GM12878 (cell line): ENCODE measurements at regions of chr13 and their contacts with region 1.

Region 1: GRCh38 chr13:44484562-44485138 is 91.5 kb downstream of the TSC22D1 start:
- DNase-seq: no peak
- ATAC-seq: peak; percentile 43; the same call in 1 of the 3 replicates
- H3K4me3 ChIP-seq: 0 out of 2 replicates have a peak overlapping the region, but pooled peaks have one; percentile 21
- H3K27ac ChIP-seq: peak overlapping the region; percentile 52
- H3K4me1 ChIP-seq: peaks cover 7% of the 10 kb centered on the region
- H3K27me3 ChIP-seq: no peaks in the 10 kb centered on the region
- CTCF ChIP-seq: no peak
- EP300 ChIP-seq: no peak
- POLR2A ChIP-seq: no peak
- RAD21 ChIP-seq: no peak

Region 2: GRCh38 chr13:44652962-44653660 is 168.5 kb after region 1 on chr13:
- CTCF ChIA-PET with region 1: no interaction called
- POLR2A ChIA-PET with region 1: no interaction called
- RAD21 ChIA-PET with region 1: no interaction called
- SMC1A ChIA-PET with region 1: no interaction called
- in situ Hi-C with region 1: no loop called
- intact Hi-C with region 1: loop called (anchors 10 kb)
- DNase-seq: no peak
- ATAC-seq: no peak
- H3K4me3 ChIP-seq: no peak overlapping the region
- H3K27ac ChIP-seq: no peak overlapping the region
- H3K4me1 ChIP-seq: no peaks in the 10 kb centered on the region
- H3K27me3 ChIP-seq: no peaks in the 10 kb centered on the region
- CTCF ChIP-seq: no peak
- EP300 ChIP-seq: no peak
- POLR2A ChIP-seq: no peak
- RAD21 ChIP-seq: no peak

Region 3: GRCh38 chr13:44758630-44759383 is 274.2 kb after region 1 on chr13:
- CTCF ChIA-PET with region 1: no interaction called
- POLR2A ChIA-PET with region 1: no interaction called
- RAD21 ChIA-PET with region 1: no interaction called
- SMC1A ChIA-PET with region 1: no interaction called
- in situ Hi-C with region 1: no loop called
- intact Hi-C with region 1: no loop called
- DNase-seq: no peak
- ATAC-seq: peak; percentile 55
- H3K4me3 ChIP-seq: no peak overlapping the region
- H3K27ac ChIP-seq: no peak overlapping the region
- H3K4me1 ChIP-seq: peaks cover 4% of the 10 kb centered on the region
- H3K27me3 ChIP-seq: no peaks in the 10 kb centered on the region
- CTCF ChIP-seq: no peak
- EP300 ChIP-seq: no peak
- POLR2A ChIP-seq: no peak
- RAD21 ChIP-seq: no peak

Region 4: DNA sequence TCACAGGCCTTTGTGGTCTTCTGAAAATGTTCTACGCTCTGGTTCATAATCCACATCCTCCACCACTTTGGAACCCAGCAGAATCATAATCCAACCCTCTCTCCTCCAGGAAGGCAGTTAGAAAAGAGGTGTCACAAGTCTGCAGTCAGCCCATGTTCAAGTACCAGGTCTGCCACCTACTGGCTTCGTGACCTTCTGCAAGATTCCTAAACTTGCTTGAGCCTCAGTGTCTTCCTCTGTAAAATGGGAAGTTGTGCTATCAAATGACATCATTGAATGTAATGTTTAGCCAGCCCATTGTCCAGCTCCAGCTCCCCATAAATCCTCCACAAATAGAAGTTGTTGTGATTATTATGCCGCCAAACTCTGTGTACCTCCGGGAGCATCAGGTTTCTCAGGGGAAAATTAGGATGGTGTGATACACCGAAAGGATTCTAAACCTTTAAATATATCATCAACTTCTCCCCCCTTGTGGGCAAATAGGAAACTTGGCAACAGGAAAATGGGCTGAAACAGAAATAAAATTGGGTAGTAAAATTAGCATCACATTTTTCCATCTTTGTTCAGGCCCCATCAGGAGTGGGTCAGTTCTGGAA is 394.9 kb after region 1 on chr13:
- CTCF ChIA-PET with region 1: interaction called, 24 read pairs
- POLR2A ChIA-PET with region 1: interaction called, 4 read pairs
- RAD21 ChIA-PET with region 1: interaction called, 7 read pairs
- SMC1A ChIA-PET with region 1: interaction called, 10 read pairs
- in situ Hi-C with region 1: loop called (anchors 5 kb)
- intact Hi-C with region 1: loop called (anchors 1 kb)
- DNase-seq: peak; percentile 8
- ATAC-seq: peak; percentile 75
- H3K4me3 ChIP-seq: no peak overlapping the region
- H3K27ac ChIP-seq: no peak overlapping the region
- H3K4me1 ChIP-seq: no peaks in the 10 kb centered on the region
- H3K27me3 ChIP-seq: no peaks in the 10 kb centered on the region
- CTCF ChIP-seq: peak; percentile 54 to 60 (median 59)
- EP300 ChIP-seq: no peak
- POLR2A ChIP-seq: no peak
- RAD21 ChIP-seq: peak; percentile 73

Region 5: DNA sequence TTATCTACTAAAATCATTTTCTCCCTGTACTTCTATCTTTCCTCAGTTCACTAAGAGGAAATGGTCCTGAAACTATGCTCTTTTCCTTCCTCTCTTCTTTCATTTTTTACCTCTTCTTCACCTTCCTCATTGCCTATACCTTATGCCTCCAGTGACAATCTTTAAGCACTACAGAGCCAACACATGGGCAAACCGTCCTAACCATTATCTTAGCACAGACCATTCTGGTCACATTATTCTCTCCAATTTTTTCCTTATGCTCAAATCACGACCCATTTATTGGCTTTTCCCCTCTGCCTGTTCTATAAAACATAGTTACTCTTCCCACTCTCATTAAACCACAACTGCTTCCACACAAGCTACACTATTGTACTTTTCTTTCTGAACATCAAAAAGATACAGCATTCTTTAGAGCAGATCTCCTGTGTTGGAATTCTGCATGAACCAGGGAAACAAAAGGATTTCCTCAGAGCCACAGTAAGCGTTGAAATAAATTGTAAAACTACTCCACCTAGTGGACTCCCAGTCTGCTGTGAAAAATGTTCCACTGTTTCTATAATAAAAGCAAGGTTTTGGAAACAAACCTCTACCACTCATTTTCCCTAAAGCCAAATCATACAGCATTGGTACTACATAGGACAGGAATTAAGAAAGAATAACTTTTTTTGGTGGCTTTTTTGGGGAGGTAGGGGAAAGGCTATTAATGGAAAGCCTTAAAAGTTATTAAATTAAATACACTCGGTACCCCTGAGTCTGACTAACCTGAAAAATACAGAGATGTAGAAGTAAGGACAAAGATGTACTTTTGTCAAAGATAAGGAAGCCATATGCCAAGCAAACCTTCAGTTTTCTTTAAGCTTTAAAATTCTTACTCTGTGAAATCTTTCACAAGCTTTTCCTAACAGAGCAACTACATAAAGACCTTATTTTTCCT is 485.2 kb after region 1 on chr13:
- CTCF ChIA-PET with region 1: interaction called, 81 read pairs
- POLR2A ChIA-PET with region 1: no interaction called
- RAD21 ChIA-PET with region 1: interaction called, 4 read pairs
- SMC1A ChIA-PET with region 1: interaction called, 16 read pairs
- in situ Hi-C with region 1: loop called (anchors 10 kb)
- intact Hi-C with region 1: loop called (anchors 2 kb)
- DNase-seq: no peak
- ATAC-seq: peak; percentile 16; the same call in 1 of the 3 replicates
- H3K4me3 ChIP-seq: no peak overlapping the region
- H3K27ac ChIP-seq: no peak overlapping the region
- H3K4me1 ChIP-seq: peaks cover 5% of the 10 kb centered on the region
- H3K27me3 ChIP-seq: no peaks in the 10 kb centered on the region
- CTCF ChIP-seq: peak; percentile 48 to 70 (median 67); a peak in 5 of 6 replicates
- EP300 ChIP-seq: no peak
- POLR2A ChIP-seq: no peak
- RAD21 ChIP-seq: peak; percentile 75

Region 6: DNA sequence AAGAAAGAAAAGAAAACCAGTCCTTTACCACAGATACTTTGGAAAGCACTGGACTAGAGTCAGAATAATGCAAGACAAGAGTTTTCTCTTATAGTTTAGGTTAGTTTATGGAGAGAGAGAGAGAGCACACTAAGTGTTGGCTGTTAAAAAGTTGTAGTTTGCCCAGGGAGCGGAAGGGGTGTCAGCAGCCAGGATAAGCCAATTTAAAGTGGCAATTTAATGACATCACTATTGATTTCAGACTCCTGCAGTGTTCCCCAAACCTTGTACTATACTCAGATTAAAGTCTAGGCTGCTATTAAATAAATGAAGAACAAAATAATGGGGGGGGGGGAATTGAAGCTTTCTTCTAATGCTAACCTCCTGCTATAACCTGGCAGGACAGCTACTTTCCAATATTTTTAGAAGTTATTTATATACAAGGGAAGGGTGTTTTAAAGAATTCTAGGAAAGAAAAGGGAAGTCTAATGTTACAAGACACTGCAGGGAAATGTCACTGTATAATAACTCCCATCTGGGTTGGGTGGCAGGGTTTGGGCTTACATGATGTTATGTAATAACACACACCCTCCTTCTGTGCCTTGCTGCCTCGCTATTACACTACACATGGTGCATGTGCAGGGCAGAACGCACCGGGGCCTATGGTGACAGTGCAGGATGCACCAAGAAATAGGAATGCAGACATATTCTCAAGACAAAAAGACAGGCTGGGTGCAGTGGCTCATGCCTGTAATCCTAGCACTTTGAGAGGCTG is 836.4 kb after region 1 on chr13:
- CTCF ChIA-PET with region 1: interaction called, 3 read pairs
- POLR2A ChIA-PET with region 1: no interaction called
- RAD21 ChIA-PET with region 1: no interaction called
- SMC1A ChIA-PET with region 1: no interaction called
- in situ Hi-C with region 1: loop called (anchors 25 kb)
- intact Hi-C with region 1: no loop called
- DNase-seq: no peak
- ATAC-seq: no peak
- H3K4me3 ChIP-seq: no peak overlapping the region
- H3K27ac ChIP-seq: no peak overlapping the region
- H3K4me1 ChIP-seq: no peaks in the 10 kb centered on the region
- H3K27me3 ChIP-seq: no peaks in the 10 kb centered on the region
- CTCF ChIP-seq: no peak
- EP300 ChIP-seq: no peak
- POLR2A ChIP-seq: no peak
- RAD21 ChIP-seq: no peak